Ascending aorta (tissue), 2 donors: ENCODE measurements at regions of chr9 and their contacts with region 1.

Region 1: DNA sequence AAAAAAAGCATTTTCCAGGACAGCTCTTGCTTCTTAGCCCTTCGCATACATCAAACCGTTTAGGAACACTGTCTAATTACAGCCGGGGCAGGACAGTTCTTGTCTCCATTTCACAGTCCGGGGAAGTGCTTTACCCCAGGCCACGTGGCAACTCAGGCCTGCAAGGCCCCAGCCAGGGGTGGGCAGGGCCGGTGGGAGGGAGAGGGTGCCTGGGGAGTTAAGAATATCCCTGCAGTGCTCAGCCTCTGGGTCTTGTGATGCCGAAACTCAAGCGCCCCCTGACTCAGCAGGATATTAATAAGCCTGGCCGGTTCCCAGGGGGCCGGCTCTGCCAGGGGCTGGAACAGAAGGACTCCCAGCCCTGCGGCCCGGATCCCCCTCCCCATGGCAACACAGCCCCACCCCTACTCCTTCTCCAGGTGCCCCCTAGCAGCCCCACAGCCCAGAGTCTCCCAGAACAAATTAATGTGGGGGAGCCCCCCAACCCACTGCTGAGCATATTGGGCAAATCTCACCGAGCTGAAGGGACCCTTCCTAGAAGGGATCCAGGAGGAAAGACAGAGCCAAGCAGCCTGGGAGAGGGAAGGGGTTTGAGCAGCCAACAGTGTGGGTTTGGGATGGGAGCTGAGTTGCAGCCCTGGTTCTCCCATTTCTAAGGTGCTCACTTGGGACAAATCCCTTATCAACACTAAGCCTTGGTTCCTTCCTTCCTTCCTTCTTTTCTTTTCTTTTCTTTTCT is 45.3 kb downstream of the PLPP7 start:
- DNase-seq: peak in 1 of 2 donors; percentile 79
- H3K4me3 ChIP-seq: no peak overlapping the region
- H3K27ac ChIP-seq: peak overlapping the region in 1 of 2 donors; percentile 11
- H3K4me1 ChIP-seq: peaks cover 0 to 9% of the 10 kb centered on the region in 2 donors
- H3K27me3 ChIP-seq: no peaks in the 10 kb centered on the region
- CTCF ChIP-seq: no peak

Region 2: GRCh38 chr9:131053896-131054295 is 280.9 kb before region 1 on chr9:
- intact Hi-C with region 1: loop called (anchors 2 kb)
- DNase-seq: no peak
- H3K4me3 ChIP-seq: no peak overlapping the region
- H3K27ac ChIP-seq: no peak overlapping the region
- H3K4me1 ChIP-seq: no peaks in the 10 kb centered on the region
- H3K27me3 ChIP-seq: no peaks in the 10 kb centered on the region
- CTCF ChIP-seq: no peak

Region 3: GRCh38 chr9:131178382-131178781 is 156.4 kb before region 1 on chr9:
- intact Hi-C with region 1: loop called (anchors 1 kb)
- DNase-seq: peak in 1 of 2 donors; percentile 71
- H3K4me3 ChIP-seq: no peak overlapping the region
- H3K27ac ChIP-seq: no peak overlapping the region
- H3K4me1 ChIP-seq: no peaks in the 10 kb centered on the region
- H3K27me3 ChIP-seq: no peaks in the 10 kb centered on the region
- CTCF ChIP-seq: peak; percentile 80 to 86 (median 85)

Region 4: DNA sequence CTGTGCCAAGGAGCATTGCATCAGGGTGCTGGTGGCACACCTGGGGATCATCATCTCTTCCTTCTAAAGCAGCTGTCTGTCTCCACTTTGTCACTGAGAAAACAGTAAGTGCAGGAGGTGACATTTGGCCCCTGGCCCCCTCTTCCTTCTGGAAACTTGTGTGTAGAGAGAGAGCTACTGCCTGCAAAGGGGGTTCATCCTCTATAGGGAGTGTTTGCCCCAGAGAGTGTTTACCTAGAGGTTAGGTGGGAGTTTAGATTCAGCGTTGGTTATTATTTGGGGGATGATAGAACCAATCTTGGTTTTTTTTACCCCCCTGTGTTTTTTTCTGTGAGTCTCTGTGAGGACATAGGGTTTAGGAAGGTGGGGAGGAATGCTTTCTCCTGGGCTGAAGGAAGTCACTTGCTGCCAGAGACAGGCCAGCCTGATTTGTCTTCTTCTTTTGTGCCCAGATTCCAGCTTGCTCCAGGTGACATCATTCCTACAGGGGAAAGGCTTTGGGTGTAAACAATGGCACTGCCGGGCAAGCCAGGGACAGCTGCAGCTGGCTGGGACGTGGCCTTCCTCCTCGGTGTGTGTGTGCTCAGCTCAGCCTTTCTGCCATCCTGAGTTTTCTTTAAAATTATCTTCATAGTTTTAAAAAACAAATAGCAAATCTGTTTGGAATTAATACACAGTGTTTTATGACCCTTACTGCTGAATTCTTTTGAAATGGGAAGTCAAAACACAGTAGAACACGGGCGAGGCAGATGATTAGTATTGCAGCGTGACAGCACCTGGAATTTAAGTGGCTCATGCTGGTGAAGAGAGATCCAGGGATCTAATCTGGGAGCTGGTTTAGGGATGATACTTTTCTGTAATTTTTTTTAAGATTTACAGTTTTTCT is 83.6 kb after region 1 on chr9:
- intact Hi-C with region 1: no loop called
- DNase-seq: no peak
- H3K4me3 ChIP-seq: no peak overlapping the region
- H3K27ac ChIP-seq: peak overlapping the region; percentile 15 to 54
- H3K4me1 ChIP-seq: peaks cover 25 to 59% of the 10 kb centered on the region in 2 donors
- H3K27me3 ChIP-seq: no peaks in the 10 kb centered on the region
- CTCF ChIP-seq: no peak